Mammary epithelial cell (primary cell): ENCODE measurements at regions of chr6 and their contacts with region 1.

Region 1: GRCh38 chr6:41367700-41368099 is 32.3 kb downstream of the NCR2 start:
- DNase-seq: peak; percentile 24
- H3K4me3 ChIP-seq: no peak overlapping the region
- H3K27ac ChIP-seq: no peak overlapping the region
- H3K4me1 ChIP-seq: peaks cover 20% of the 10 kb centered on the region
- H3K27me3 ChIP-seq: no peaks in the 10 kb centered on the region
- CTCF ChIP-seq: peak; percentile 71 to 77

Region 2: DNA sequence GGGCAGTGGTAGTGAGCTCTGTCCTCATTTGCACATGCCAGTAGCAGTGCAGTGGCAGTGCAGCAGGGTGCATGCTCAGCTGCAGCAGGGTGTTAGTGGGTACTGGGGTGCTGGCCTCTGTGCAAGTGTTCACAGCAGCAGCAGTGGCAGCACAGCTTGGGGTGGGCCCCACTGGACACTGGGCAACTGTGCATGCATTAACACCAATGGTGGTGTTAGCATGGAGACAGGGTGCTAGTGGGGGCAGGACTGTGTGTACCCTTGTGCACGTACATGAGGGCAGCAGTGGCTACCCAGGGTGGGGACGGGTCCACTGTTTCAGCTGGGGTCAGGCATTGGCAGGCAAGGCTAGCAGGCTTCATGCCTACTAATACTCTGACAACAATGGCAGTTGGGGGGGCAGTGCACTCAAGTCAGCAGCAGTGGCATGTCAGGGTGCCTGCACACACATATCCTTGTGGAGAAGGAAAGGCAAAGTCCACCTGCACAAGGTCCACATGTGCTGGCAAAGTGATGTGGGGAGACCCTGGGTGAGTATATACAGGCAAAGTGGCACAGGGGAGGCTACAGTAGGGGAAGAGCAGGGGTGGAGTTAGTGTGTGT is 388.9 kb before region 1 on chr6:
- CTCF ChIA-PET with region 1: no interaction called
- dilution Hi-C with region 1: no loop called
- in situ Hi-C with region 1: no loop called
- intact Hi-C with region 1: no loop called
- DNase-seq: no peak
- H3K4me3 ChIP-seq: no peak overlapping the region
- H3K27ac ChIP-seq: no peak overlapping the region
- H3K4me1 ChIP-seq: no peaks in the 10 kb centered on the region
- H3K27me3 ChIP-seq: no peaks in the 10 kb centered on the region
- CTCF ChIP-seq: no peak

Region 3: DNA sequence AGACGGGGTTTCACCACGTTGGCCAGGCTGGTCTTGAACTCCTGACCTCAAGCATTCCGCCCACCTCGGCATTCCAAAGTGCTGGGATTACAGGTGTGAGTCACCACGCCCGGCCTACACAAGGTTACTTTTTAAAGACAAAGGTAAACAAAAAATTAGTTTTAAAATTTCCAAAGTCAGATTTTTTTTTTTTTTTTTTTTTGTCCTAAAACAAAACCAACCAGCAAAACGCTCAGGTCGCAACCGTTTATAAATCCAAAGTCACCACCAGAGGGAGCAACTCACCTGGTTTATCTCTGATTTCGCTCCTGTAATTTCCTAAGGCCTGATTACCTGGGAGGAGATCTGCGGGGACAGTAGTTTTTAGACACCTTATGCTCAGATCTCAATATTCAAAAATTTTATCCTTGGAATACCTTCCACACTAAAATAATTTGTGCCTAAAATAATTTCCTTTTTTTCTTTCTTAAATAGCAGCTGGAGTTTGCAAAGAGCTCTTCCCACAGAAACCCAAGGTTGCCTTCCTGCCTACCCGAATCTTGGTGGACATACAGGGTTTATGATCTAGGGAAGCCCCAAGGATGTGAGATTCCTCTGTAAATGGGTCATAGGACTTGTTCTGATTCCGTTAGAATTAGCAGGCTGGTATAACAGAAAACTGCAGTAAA is 61.4 kb before region 1 on chr6:
- CTCF ChIA-PET with region 1: no interaction called
- dilution Hi-C with region 1: no loop called
- in situ Hi-C with region 1: no loop called
- intact Hi-C with region 1: loop called (anchors 2 kb)
- DNase-seq: peak; percentile 52
- H3K4me3 ChIP-seq: no peak overlapping the region
- H3K27ac ChIP-seq: no peak overlapping the region
- H3K4me1 ChIP-seq: no peaks in the 10 kb centered on the region
- H3K27me3 ChIP-seq: peaks cover 3% of the 10 kb centered on the region
- CTCF ChIP-seq: peak; percentile 52 to 54

Region 4: DNA sequence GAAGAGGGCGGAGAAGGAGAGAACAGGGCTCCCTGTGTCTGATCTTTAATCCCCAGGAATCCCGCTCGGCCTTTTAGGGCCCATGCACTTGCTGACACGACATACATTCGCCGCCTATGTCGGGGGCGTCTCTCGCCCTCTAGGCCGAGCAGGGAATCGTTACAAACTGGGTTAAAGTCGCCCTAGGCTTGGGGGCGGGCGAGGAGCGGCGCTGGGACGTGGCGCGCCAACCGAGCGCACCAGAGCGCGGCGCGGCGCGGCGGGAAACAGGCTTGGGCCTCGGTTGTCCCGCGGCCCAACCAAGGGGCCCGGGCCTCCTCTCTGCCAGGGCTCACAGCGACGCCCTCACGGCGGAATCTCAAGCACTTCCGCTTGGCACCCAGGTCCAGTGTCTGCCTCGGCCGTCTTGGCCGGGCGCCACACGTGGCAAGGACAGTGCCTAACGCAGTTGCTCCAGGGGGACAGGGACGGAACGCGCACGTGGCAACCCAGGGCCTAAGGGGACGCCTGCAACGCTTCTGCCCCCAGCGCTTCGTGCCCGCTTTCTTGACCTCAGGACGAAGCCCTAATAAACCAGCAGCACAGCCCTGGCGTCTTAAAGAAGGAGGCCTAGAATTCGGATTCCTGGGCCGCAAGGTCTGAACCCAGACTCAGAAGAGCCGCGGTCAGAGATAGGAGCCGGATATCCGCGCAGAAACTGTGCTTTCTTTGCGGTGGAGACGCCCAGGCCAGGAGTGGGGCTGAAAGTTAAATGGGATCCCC is 39.2 kb after region 1 on chr6:
- CTCF ChIA-PET with region 1: no interaction called
- dilution Hi-C with region 1: no loop called
- in situ Hi-C with region 1: no loop called
- intact Hi-C with region 1: no loop called
- DNase-seq: no peak
- H3K4me3 ChIP-seq: no peak overlapping the region
- H3K27ac ChIP-seq: no peak overlapping the region
- H3K4me1 ChIP-seq: no peaks in the 10 kb centered on the region
- H3K27me3 ChIP-seq: no peaks in the 10 kb centered on the region
- CTCF ChIP-seq: no peak

Region 5: DNA sequence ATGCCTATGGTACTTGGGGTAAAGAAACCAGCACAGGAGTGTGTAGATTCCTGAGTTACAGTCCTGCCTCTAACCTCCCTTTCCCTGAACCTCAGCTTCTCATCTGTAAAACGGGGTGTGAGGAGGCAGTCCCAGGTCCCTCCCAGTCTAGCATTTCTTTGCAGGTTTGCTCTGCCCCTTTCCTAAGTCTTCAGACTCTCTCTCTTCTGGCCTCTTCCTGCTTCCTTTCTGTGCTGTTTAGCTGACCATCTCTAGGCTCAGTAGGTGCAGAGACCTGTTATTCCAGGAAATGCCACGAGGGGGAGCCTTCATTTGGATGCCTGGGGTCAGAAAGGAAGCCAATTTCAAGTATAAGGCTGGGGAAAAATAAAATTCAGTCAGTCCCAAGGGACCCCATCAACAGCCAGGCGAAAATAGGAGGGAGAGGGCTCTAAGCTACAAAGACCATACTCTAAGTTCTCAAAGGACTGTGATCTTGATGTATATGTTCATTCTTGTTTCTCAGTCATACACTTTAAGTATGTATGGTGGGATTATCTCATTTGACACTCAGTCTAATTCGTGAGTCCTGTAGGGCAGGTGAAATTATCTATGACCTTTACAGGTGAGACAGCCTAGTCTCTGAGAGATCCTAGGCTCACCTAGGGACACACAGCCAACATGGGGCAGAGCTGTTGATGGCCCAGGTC is 56.8 kb after region 1 on chr6:
- CTCF ChIA-PET with region 1: no interaction called
- dilution Hi-C with region 1: no loop called
- in situ Hi-C with region 1: no loop called
- intact Hi-C with region 1: loop called (anchors 1 kb)
- DNase-seq: peak; percentile 55
- H3K4me3 ChIP-seq: no peak overlapping the region
- H3K27ac ChIP-seq: no peak overlapping the region
- H3K4me1 ChIP-seq: peaks cover 15% of the 10 kb centered on the region
- H3K27me3 ChIP-seq: peaks cover 3% of the 10 kb centered on the region
- CTCF ChIP-seq: peak; percentile 87 to 90

Region 6: GRCh38 chr6:41463062-41463930 is 95.6 kb after region 1 on chr6:
- CTCF ChIA-PET with region 1: no interaction called
- dilution Hi-C with region 1: no loop called
- in situ Hi-C with region 1: no loop called
- intact Hi-C with region 1: loop called (anchors 5 kb)
- DNase-seq: peak; percentile 39
- H3K4me3 ChIP-seq: no peak overlapping the region
- H3K27ac ChIP-seq: no peak overlapping the region
- H3K4me1 ChIP-seq: no peaks in the 10 kb centered on the region
- H3K27me3 ChIP-seq: no peaks in the 10 kb centered on the region
- CTCF ChIP-seq: peak; percentile 66 to 68

Region 7: GRCh38 chr6:41591859-41592502 is 224.3 kb after region 1 on chr6:
- CTCF ChIA-PET with region 1: no interaction called
- dilution Hi-C with region 1: no loop called
- in situ Hi-C with region 1: loop called (anchors 5 kb)
- intact Hi-C with region 1: loop called (anchors 1 kb)
- DNase-seq: peak; percentile 41
- H3K4me3 ChIP-seq: no peak overlapping the region
- H3K27ac ChIP-seq: no peak overlapping the region
- H3K4me1 ChIP-seq: no peaks in the 10 kb centered on the region
- H3K27me3 ChIP-seq: no peaks in the 10 kb centered on the region
- CTCF ChIP-seq: peak; percentile 88 to 92

Region 8: DNA sequence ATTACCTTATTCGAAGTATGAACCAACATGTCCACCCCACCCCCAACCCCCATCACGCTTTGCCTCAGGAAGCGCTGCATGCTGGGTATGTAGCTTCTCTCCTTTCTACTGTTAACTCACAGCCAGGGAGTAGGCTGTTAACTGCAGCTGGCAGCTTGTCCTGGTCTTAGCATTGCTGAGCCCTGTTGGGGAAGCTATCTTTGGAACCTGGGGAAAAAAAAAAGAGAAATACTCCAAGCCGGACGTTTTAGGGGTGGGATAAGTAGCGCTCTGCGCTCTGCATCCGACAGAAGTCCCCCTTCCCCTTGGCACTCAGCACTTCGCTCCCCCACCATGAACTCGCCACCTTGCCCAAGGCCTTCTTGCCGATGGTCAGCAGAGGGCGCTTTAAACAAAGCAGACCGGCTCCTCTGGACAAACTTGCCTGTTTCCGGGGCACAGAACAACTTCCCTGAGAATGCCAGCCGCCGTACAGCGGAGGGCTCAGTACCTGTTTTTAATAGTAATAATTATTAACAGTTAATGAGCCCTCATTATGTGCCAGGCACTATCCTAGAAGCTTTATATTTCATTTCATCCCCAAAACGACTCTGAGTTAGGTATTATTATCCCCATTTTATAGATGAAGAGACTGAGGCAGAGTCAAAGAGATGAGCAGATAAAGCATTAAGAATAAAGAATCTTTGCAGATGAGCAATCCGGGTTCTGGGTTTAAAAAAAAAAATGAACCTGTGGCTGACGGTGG is 235.3 kb after region 1 on chr6:
- CTCF ChIA-PET with region 1: no interaction called
- dilution Hi-C with region 1: no loop called
- in situ Hi-C with region 1: no loop called
- intact Hi-C with region 1: loop called (anchors 1 kb)
- DNase-seq: peak; percentile 65
- H3K4me3 ChIP-seq: no peak overlapping the region
- H3K27ac ChIP-seq: no peak overlapping the region
- H3K4me1 ChIP-seq: no peaks in the 10 kb centered on the region
- H3K27me3 ChIP-seq: no peaks in the 10 kb centered on the region
- CTCF ChIP-seq: peak; percentile 93 to 95

Region 9: GRCh38 chr6:41636833-41637193 is 269.1 kb after region 1 on chr6:
- CTCF ChIA-PET with region 1: no interaction called
- dilution Hi-C with region 1: no loop called
- in situ Hi-C with region 1: no loop called
- intact Hi-C with region 1: no loop called
- DNase-seq: peak; percentile 91
- H3K4me3 ChIP-seq: peak overlapping the region; percentile 54 to 80 (median 76)
- H3K27ac ChIP-seq: peak overlapping the region; percentile 83
- H3K4me1 ChIP-seq: peaks cover 41% of the 10 kb centered on the region
- H3K27me3 ChIP-seq: no peaks in the 10 kb centered on the region
- CTCF ChIP-seq: no peak

Region 10: GRCh38 chr6:41683510-41684310 is 316.0 kb after region 1 on chr6:
- CTCF ChIA-PET with region 1: no interaction called
- dilution Hi-C with region 1: no loop called
- in situ Hi-C with region 1: loop called (anchors 10 to 25 kb)
- intact Hi-C with region 1: loop called (anchors 1 kb)
- DNase-seq: peak; percentile 39
- H3K4me3 ChIP-seq: no peak overlapping the region
- H3K27ac ChIP-seq: no peak overlapping the region
- H3K4me1 ChIP-seq: peaks cover 3% of the 10 kb centered on the region
- H3K27me3 ChIP-seq: no peaks in the 10 kb centered on the region
- CTCF ChIP-seq: peak; percentile 75 to 85